ENCODE measurements at regions of chr6 and their contacts with region 1.

Region 1: GRCh38 chr6:149028767-149029405 is 282.1 kb downstream of the UST start:
- DNase-seq: peak; percentile 83
- ATAC-seq: peak; percentile 10
- H3K4me3 Mint-ChIP-seq: peak overlapping the region; percentile 32
- H3K27ac Mint-ChIP-seq: peak overlapping the region; percentile 72
- H3K4me1 Mint-ChIP-seq: peaks cover 55% of the 10 kb centered on the region
- H3K27me3 Mint-ChIP-seq: no peaks in the 10 kb centered on the region

Region 2: DNA sequence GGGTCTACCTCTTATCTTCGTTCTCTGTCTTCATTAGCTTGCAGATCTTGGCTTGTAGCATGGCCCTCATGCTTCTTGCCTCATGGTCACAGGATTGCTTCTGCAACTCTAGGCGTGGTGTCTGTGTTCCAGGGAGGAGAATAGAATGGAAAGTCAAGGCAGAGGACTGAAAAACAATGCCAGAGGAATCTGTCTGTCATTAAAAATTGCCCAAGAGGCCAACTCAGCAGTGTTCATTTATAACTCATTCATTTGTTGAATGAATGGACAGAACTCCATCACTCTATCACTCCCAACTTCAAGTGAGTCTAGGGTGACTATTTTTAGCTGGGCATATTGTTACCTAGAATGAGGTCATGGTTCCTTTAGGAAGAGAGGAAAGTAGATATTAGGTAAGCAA is 102.4 kb before region 1 on chr6:
- CTCF ChIA-PET with region 1: no interaction called
- DNase-seq: no peak
- ATAC-seq: no peak
- H3K4me3 Mint-ChIP-seq: no peak overlapping the region
- H3K27ac Mint-ChIP-seq: no peak overlapping the region
- H3K4me1 Mint-ChIP-seq: no peaks in the 10 kb centered on the region
- H3K27me3 Mint-ChIP-seq: no peaks in the 10 kb centered on the region

Region 3: DNA sequence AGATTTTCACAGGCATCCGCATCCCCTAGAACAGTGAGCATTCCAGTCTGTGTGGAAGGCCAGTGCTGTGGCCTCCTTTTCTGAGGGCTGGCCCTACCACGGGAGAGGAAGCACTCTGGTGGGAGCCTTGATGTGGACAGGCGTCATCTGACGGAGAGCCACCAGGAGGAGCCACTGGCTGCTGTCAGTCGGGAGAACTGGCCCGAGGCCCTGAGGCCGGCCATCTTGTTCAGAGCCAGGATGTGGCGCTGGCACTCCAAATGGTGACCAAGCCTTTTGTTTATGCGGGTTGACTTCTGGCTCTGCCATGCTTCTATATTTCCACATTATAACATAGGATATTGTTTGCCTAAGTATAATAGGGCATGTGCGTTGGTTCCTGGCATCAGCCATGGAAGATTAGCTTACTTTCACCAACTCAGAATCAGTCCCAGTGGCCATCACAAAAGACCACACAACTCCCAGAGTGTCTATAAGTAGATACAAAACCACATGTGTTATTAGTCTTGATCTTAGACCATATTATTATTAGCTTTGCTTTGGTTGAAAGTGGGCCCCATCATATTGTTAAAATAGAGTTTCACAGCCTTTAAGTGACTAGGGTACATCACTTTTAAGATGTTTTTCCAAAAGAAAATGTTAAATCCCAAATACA is 14.7 kb after region 1 on chr6:
- CTCF ChIA-PET with region 1: interaction called, 61 read pairs
- DNase-seq: peak; percentile 62
- ATAC-seq: no peak
- H3K4me3 Mint-ChIP-seq: no peak overlapping the region
- H3K27ac Mint-ChIP-seq: no peak overlapping the region
- H3K4me1 Mint-ChIP-seq: peaks cover 60% of the 10 kb centered on the region
- H3K27me3 Mint-ChIP-seq: no peaks in the 10 kb centered on the region

Region 4: GRCh38 chr6:149060300-149060997 is 31.6 kb after region 1 on chr6:
- CTCF ChIA-PET with region 1: interaction called, 17 read pairs
- DNase-seq: peak; percentile 83
- ATAC-seq: peak; percentile 87
- H3K4me3 Mint-ChIP-seq: peak overlapping the region; percentile 62
- H3K27ac Mint-ChIP-seq: peak overlapping the region; percentile 92
- H3K4me1 Mint-ChIP-seq: peaks cover 73% of the 10 kb centered on the region
- H3K27me3 Mint-ChIP-seq: no peaks in the 10 kb centered on the region

Region 5: GRCh38 chr6:149075616-149076364 is 46.9 kb after region 1 on chr6:
- CTCF ChIA-PET with region 1: interaction called, 26 read pairs
- DNase-seq: no peak
- ATAC-seq: peak; percentile 57
- H3K4me3 Mint-ChIP-seq: no peak overlapping the region
- H3K27ac Mint-ChIP-seq: peak overlapping the region; percentile 66
- H3K4me1 Mint-ChIP-seq: peaks cover 43% of the 10 kb centered on the region
- H3K27me3 Mint-ChIP-seq: no peaks in the 10 kb centered on the region